Left ventricle myocardium superior (tissue), 1 donor: ENCODE measurements at regions of chr5 and their contacts with region 1.

Region 1: GRCh38 chr5:137051165-137051564 is 448.0 kb downstream of the SPOCK1 start:
- DNase-seq: no peak
- ATAC-seq: peak; percentile 29

Region 2: DNA sequence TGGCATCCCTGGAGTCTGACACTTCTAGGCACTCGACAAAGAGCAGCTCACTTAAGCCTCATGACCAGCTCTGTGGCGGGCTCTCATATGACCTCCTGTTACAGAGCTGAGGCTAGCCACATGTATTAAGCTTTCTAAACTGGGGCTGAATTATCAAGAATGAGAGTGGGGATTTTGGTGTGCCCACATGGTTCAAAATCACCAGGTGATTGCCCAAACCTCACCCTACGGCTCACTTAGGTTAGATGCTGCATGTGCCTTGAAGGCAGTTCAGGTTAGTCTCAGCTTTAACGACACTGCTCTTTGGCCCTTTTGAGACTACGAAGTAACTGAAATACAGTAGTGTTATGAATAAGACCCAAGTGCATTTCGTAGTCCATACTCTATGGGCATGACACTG is 818.8 kb before region 1 on chr5:
- intact Hi-C with region 1: no loop called
- DNase-seq: no peak
- ATAC-seq: no peak

Region 3: GRCh38 chr5:136802383-136802782 is 248.8 kb before region 1 on chr5:
- intact Hi-C with region 1: loop called (anchors 10 kb)
- DNase-seq: no peak
- ATAC-seq: peak; percentile 49

Region 4: GRCh38 chr5:137252512-137252911 is 201.3 kb after region 1 on chr5:
- intact Hi-C with region 1: no loop called
- DNase-seq: no peak
- ATAC-seq: no peak

Region 5: DNA sequence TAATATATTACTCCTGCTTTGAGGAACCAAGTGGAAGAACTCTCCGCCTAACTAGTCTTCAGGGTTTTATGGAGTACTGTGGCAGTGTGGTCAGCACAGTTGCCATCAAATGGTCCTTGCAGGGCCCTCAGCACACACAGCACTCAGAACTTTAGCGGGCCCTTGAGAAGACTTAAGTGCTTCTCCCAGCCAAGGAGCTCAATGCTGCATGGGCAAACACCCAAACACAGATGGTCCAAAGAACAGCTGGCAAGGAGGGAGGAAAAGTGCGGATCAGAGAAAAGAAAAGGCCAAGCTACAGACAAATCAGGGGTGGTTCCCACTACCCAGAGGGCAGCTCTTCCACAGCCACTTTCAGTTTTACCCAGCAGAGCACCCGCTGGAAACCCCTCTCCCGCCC is 349.4 kb after region 1 on chr5:
- intact Hi-C with region 1: no loop called
- DNase-seq: no peak
- ATAC-seq: no peak